Activated B cell treated with CpG ODN at 0.5 μM for 24 hours (primary cell): ENCODE measurements at regions of chr17 and their contacts with region 1.

Region 1: DNA sequence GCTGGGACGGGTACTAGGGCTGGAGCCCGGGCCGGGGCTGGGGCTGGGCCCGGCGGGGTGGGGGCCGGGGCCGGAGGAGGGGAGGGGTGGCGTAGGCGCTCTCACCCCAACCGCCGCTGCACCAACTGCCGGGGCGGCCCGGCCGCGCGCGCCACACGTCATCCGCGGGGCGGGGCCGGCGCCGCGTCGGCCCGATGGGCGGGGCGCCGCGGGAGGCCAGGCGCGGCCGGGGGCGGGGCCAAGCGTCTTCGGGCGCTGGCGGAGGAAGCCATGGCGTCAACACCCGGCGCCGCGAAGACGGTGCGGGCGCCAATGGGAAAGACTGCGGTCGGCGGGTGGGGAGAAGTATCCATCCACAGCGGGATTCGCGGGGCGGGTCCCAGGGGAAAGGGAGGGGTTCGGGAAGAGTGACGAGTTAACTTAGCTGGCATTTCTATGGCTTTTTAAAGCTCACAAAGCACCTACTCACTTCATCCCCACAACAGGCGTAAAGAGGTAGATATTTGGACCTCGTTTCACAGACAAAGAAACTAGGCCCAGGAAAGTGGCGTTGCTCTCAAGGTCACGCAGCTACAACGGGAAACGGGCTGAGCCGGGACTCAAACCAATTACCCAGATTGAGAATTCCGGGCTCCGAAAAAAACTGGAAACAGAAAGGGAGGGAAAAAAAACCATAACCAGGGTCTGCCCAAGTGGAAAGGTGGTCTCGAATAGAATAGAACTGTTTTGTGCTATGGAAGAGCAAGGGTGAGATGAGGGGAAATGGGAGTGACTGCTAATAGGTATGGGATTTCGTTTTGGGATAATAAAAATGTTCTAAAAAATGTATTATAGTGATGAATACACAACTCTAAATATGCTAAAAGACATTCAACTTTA is at the start of gene SPAG9:
- DNase-seq: peak; percentile 95
- ATAC-seq: peak; percentile 83
- H3K4me3 Mint-ChIP-seq: peak within 1 kb of the TSS; percentile 94
- H3K27ac Mint-ChIP-seq: peak within 1 kb of the TSS; percentile 99
- H3K4me1 Mint-ChIP-seq: peaks cover 56% of the 10 kb centered on the region
- H3K27me3 Mint-ChIP-seq: no peaks in the 10 kb centered on the region
- CTCF ChIP-seq: no peak
- total RNA-seq, gene SPAG9: 41.6 and 49.3 TPM in 2 replicates

Region 2: DNA sequence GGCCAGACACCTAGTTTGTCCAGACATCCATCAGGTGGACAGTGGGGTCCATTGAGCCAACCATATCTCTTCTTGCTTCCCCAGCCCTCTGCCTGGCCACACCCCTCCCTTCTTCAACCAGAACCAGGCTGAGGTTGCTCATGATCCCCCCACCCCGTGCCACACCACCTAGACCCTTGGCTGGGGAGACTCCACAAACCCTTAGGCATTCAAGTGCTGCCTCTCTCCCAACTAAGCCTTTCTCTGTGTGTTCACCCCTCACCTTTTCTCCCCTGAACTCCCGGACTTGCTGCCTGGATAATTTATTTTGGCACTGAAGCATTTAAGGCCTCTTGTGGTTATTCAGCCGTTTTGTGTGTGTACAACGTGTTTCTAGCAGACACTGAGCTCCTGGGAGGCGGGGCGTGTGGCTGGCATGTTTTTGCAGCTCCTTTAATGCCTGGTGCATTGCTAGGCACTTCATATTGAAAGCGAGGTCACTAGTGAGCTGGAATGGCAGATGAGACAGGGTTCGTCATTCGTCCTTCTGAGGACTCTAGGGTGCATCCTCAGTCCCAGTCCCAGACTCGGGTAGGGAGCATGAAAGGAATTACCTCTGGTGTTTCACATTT is 531.8 kb before region 1 on chr17:
- CTCF ChIA-PET with region 1: no interaction called
- POLR2A ChIA-PET with region 1: no interaction called
- intact Hi-C with region 1: no loop called
- DNase-seq: no peak
- ATAC-seq: no peak
- H3K4me3 Mint-ChIP-seq: no peak overlapping the region
- H3K27ac Mint-ChIP-seq: no peak overlapping the region
- H3K4me1 Mint-ChIP-seq: no peaks in the 10 kb centered on the region
- H3K27me3 Mint-ChIP-seq: peaks cover 6% of the 10 kb centered on the region
- CTCF ChIP-seq: no peak

Region 3: GRCh38 chr17:51015145-51015558 is 105.8 kb before region 1 on chr17:
- CTCF ChIA-PET with region 1: no interaction called
- POLR2A ChIA-PET with region 1: no interaction called
- intact Hi-C with region 1: no loop called
- DNase-seq: no peak
- ATAC-seq: no peak
- H3K4me3 Mint-ChIP-seq: no peak overlapping the region
- H3K27ac Mint-ChIP-seq: no peak overlapping the region
- H3K4me1 Mint-ChIP-seq: no peaks in the 10 kb centered on the region
- H3K27me3 Mint-ChIP-seq: no peaks in the 10 kb centered on the region
- CTCF ChIP-seq: no peak

Region 4: DNA sequence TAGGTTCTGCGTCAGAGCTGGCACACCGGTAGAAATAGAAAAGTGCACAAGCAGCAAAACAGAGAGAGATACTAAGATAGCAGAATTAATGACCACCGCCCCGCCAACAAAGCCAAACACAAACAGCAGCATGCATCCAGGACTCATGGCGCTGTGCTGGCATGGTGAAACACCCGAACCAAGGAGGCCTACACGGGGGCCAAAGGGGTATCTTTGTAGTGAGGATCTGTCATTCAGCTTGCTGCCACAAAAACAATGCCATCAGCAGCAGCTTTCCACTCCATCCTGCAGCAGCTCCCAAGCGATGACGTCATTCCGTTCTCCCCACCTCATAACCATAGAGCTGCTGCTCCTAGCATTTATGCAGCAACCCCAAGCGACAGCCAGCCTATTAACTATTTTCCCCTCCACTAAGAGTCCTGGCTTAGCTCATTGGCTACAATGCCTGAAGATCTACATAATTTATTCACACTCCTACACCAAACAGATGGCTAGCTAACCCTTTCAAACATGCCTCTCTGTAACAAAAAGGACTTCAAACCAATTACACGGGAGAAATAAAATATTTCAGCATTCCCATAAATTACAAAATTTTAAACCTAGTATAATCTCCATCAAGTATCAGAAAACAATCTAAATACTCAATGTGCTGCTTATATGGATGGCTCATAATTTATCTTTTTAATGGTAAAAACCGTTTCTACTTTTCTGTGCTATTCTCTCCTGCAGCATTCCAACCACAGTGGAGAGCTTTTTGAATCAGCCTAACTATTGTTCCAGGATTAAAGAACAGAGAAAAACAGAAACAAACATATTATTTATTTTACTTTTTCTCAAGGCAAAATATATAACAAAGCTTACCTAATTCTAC is 74.2 kb before region 1 on chr17:
- CTCF ChIA-PET with region 1: no interaction called
- POLR2A ChIA-PET with region 1: interaction called, 4 read pairs
- intact Hi-C with region 1: loop called (anchors 2 kb)
- DNase-seq: no peak
- ATAC-seq: no peak
- H3K4me3 Mint-ChIP-seq: no peak overlapping the region
- H3K27ac Mint-ChIP-seq: no peak overlapping the region
- H3K4me1 Mint-ChIP-seq: peaks cover 26% of the 10 kb centered on the region
- H3K27me3 Mint-ChIP-seq: no peaks in the 10 kb centered on the region
- CTCF ChIP-seq: no peak

Region 5: DNA sequence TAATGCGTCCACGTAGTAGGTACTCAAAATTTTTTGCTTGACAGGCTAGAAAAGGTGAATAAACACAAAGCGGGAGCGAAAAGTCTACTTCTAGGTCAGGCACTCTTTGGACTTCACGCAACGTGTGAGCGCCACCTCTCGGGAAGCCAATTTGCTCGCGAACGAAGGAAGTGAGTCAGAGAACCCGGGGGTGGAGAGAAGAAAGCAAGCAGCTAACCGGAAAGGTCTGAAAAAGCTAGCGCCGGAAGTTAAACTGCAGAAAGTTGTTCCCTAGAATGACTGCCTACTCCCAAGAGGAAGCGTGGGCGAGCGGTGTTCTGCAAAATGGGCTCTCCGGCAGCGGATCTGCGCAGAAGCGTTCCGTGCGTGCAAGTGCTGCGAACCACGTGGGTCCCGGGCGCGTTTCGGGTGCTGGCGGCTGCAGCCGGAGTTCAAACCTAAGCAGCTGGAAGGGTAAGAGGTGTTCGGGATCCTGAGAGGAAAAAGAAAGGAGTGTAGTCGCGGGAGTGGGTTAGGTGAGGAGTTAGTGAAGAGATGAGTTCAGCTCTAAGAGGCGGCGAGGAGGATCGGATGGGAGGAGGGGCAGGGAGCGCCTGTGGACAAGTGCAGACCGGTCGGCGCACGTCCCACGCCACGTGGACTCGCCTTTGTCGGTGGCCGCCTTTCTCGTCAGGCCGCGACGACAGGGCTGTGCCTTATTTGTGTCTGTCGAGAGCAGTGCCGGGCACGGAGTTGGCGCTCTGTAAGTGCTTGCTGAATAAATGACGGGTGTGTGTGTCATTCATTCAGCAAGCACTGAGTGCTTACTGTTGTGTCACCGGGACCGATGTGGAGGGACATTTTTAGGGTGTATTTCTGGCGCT is 32.5 kb after region 1 on chr17 and contains the start of gene NME1:
- CTCF ChIA-PET with region 1: interaction called, 15 read pairs
- POLR2A ChIA-PET with region 1: interaction called, 17 read pairs
- intact Hi-C with region 1: loop called (anchors 1 kb)
- DNase-seq: peak; percentile 99
- ATAC-seq: peak; percentile 88
- H3K4me3 Mint-ChIP-seq: no peak within 1 kb of the TSS
- H3K27ac Mint-ChIP-seq: no peak within 1 kb of the TSS
- H3K4me1 Mint-ChIP-seq: peaks cover 7% of the 10 kb centered on the region
- H3K27me3 Mint-ChIP-seq: no peaks in the 10 kb centered on the region
- CTCF ChIP-seq: no peak
- total RNA-seq, gene NME1: 130 and 138 TPM in 2 replicates

Region 6: GRCh38 chr17:51166197-51166986 is 45.4 kb after region 1 on chr17 and contains the start of gene NME2:
- CTCF ChIA-PET with region 1: no interaction called
- POLR2A ChIA-PET with region 1: interaction called, 16 read pairs
- intact Hi-C with region 1: loop called (anchors 1 kb)
- DNase-seq: peak; percentile 85
- ATAC-seq: peak; percentile 86
- H3K4me3 Mint-ChIP-seq: peak within 1 kb of the TSS; percentile 86
- H3K27ac Mint-ChIP-seq: peak within 1 kb of the TSS; percentile 90
- H3K4me1 Mint-ChIP-seq: peaks cover 24% of the 10 kb centered on the region
- H3K27me3 Mint-ChIP-seq: no peaks in the 10 kb centered on the region
- CTCF ChIP-seq: no peak
- total RNA-seq, gene NME2: 439 and 524 TPM in 2 replicates

Region 7: DNA sequence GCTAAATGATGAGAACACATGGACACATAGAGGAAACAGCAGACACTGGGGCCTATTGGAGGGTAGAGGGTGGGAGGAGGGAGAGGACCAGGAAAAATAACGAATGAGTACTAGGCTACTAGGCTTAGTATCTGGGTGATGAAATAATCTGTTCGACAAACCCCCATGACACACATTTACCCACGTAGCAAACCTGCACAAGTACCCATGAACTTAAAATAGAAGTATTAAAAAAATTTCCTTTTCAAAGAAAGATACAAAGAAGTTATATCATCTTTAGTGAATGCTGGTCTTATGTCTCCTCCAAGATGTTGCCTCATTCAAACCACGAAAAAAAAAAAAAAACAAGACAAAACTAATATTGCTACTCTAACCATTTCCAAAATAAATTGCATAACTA is 107.2 kb after region 1 on chr17:
- CTCF ChIA-PET with region 1: no interaction called
- POLR2A ChIA-PET with region 1: no interaction called
- intact Hi-C with region 1: no loop called
- DNase-seq: no peak
- ATAC-seq: no peak
- H3K4me3 Mint-ChIP-seq: no peak overlapping the region
- H3K27ac Mint-ChIP-seq: no peak overlapping the region
- H3K4me1 Mint-ChIP-seq: peaks cover 54% of the 10 kb centered on the region
- H3K27me3 Mint-ChIP-seq: no peaks in the 10 kb centered on the region
- CTCF ChIP-seq: no peak

Region 8: DNA sequence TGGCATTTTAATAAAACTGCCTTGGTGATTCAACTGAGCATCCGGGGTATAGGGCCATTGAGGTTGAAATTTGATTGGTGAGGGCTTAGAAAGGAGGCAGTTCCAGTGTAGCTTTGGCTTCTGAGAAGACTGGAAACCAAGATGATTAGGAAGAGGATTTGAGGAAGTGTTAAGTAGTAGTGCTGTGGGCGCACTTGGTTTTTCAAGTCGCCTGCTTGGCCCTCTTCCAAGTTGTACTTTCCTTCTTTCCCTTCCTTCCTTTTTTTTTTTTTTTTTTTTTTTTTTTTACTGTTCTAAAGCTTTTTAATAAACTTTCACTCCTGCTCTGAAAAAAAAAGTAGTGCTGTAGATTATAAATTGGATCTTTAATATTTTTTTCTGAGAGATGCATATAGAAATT is 459.9 kb after region 1 on chr17:
- CTCF ChIA-PET with region 1: no interaction called
- POLR2A ChIA-PET with region 1: no interaction called
- intact Hi-C with region 1: no loop called
- DNase-seq: no peak
- ATAC-seq: no peak
- H3K4me3 Mint-ChIP-seq: no peak overlapping the region
- H3K27ac Mint-ChIP-seq: no peak overlapping the region
- H3K4me1 Mint-ChIP-seq: no peaks in the 10 kb centered on the region
- H3K27me3 Mint-ChIP-seq: no peaks in the 10 kb centered on the region
- CTCF ChIP-seq: no peak